ENCODE measurements at regions of chr2 and their contacts with region 1.

Region 1: GRCh38 chr2:29014811-29015421 is 33.8 kb downstream of the TOGARAM2 start:
- DNase-seq: peak; percentile 63 to 67
- ATAC-seq: peak; percentile 3 to 48 (median 26)
- H3K4me3 ChIP-seq: peak overlapping the region in 8 of 10 donors; percentile 1 to 41 (median 29)
- H3K27ac ChIP-seq: peak overlapping the region; percentile 49 to 95 (median 88)
- H3K4me1 ChIP-seq: peaks cover 22 to 84% (median 72%) of the 10 kb centered on the region in 9 donors
- H3K27me3 ChIP-seq: no peaks in the 10 kb centered on the region
- CTCF ChIP-seq: peak in 2 of 9 donors; percentile 23 to 33

Region 2: GRCh38 chr2:28981016-28981441 is 33.9 kb before region 1 on chr2 and contains the start of gene TOGARAM2:
- intact Hi-C with region 1: loop called in 2 of 10 experiments (anchors 1 to 2 kb)
- DNase-seq: peak; percentile 20 to 40
- ATAC-seq: peak; percentile 23 to 81 (median 60)
- H3K4me3 ChIP-seq: no peak within 1 kb of the TSS
- H3K27ac ChIP-seq: peak within 1 kb of the TSS in 8 of 10 donors; percentile 4 to 79 (median 68)
- H3K4me1 ChIP-seq: peaks cover 0 to 32% (median 7%) of the 10 kb centered on the region in 9 donors
- H3K27me3 ChIP-seq: no peaks in the 10 kb centered on the region
- CTCF ChIP-seq: no peak
- total RNA-seq, gene TOGARAM2: 1.4 to 56.7 (median 14.6) TPM